ENCODE measurements at regions of chr14 and their contacts with region 1.

Region 1: DNA sequence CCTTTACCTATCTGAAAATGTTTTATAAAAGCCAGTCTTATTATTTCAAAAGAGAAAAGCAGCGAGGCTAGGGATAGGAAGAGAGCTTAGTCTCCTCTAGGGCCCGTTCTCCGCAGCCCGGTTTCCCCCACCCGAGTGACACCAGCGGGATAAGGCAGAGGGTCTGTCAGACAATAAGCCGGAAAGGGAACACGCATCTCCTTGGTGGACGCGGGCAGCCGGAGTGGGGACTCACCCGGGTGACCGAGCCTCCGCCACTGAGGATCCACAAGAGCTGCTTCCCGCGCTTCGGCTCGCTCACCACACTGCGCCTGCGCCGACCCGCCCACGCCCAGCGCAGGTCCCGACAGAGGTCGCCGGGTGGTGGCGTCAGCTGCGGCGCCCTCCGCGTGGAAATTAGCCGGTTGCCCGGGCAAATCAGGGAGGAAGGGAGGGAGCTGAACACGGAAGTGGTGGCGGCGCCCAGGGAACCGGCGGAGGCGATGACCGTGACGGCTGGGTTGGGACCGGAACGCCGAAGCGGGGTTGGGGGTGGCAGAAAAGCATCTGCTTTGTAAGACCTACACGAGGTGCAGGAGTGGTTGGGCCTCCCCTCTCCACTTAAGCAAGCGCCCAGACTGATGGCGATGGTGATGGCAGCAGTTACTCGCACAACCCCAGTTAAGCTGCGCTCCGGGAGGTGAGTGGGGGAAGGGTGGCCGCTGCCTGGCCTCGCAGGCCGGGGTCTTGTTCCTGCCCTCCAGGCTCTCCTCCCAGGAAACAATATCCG is at the starts of genes SOCS4 and WDHD1:
- DNase-seq: peak; percentile 95
- H3K4me3 ChIP-seq: peak within 1 kb of the TSS; percentile 81
- H3K27ac ChIP-seq: peak within 1 kb of the TSS; percentile 75
- H3K4me1 ChIP-seq: peaks cover 37% of the 10 kb centered on the region
- CTCF ChIP-seq: no peak
- total RNA-seq, gene SOCS4: 18.5 and 23.0 TPM in 2 replicates
- total RNA-seq, gene WDHD1: 33.5 and 42.6 TPM in 2 replicates

Region 2: DNA sequence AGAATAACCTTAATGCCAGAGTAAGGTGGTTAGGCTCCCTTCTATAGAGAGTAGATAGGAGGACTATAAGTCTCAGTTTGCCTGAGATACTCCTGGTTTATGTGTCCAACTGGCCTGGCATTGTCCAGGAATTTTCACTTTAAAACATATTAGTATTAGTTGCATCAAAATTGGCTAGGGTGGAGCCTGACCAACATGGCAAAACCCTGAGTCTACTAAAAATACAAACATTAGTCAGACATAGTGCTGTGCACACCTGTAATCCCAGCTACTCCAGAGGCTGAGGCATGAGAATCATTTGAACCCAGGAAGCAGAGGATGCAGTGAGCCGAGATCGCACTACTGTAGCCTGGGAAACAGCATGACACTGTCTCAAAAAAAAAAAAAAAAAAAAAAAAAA is 12.0 kb before region 1 on chr14:
- CTCF ChIA-PET with region 1: no interaction called
- POLR2A ChIA-PET with region 1: interaction called, 19 read pairs
- intact Hi-C with region 1: no loop called
- DNase-seq: no peak
- H3K4me3 ChIP-seq: no peak overlapping the region
- H3K27ac ChIP-seq: no peak overlapping the region
- H3K4me1 ChIP-seq: no peaks in the 10 kb centered on the region
- CTCF ChIP-seq: no peak

Region 3: DNA sequence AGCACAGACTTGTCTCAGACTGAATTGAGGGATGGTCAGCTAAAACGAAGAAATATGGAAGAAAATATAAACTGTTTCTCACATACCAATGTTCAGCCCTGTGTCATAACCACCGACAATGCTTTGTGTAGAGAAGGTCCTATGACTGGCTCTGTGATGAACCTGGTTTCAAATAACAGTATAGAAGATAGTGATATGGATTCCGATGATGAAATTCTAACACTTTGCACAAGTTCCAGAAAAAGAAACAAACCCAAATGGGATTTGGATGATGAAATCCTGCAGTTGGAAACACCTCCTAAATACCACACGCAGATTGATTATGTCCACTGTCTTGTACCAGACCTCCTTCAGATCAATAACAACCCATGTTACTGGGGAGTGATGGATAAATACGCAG is 16.6 kb after region 1 on chr14:
- CTCF ChIA-PET with region 1: no interaction called
- POLR2A ChIA-PET with region 1: interaction called, 19 read pairs
- intact Hi-C with region 1: no loop called
- DNase-seq: no peak
- H3K4me3 ChIP-seq: no peak overlapping the region
- H3K27ac ChIP-seq: no peak overlapping the region
- H3K4me1 ChIP-seq: no peaks in the 10 kb centered on the region
- CTCF ChIP-seq: no peak

Region 4: GRCh38 chr14:55051426-55052268 is 24.7 kb after region 1 on chr14 and contains the start of gene MAPK1IP1L:
- CTCF ChIA-PET with region 1: interaction called, 3 read pairs
- POLR2A ChIA-PET with region 1: interaction called, 12 read pairs
- intact Hi-C with region 1: loop called (anchors 1 kb)
- DNase-seq: peak; percentile 92
- H3K4me3 ChIP-seq: peak within 1 kb of the TSS; percentile 95
- H3K27ac ChIP-seq: peak within 1 kb of the TSS; percentile 81
- H3K4me1 ChIP-seq: peaks cover 20% of the 10 kb centered on the region
- CTCF ChIP-seq: peak; percentile 87
- total RNA-seq, gene MAPK1IP1L: 24.6 and 27.9 TPM in 2 replicates

Region 5: DNA sequence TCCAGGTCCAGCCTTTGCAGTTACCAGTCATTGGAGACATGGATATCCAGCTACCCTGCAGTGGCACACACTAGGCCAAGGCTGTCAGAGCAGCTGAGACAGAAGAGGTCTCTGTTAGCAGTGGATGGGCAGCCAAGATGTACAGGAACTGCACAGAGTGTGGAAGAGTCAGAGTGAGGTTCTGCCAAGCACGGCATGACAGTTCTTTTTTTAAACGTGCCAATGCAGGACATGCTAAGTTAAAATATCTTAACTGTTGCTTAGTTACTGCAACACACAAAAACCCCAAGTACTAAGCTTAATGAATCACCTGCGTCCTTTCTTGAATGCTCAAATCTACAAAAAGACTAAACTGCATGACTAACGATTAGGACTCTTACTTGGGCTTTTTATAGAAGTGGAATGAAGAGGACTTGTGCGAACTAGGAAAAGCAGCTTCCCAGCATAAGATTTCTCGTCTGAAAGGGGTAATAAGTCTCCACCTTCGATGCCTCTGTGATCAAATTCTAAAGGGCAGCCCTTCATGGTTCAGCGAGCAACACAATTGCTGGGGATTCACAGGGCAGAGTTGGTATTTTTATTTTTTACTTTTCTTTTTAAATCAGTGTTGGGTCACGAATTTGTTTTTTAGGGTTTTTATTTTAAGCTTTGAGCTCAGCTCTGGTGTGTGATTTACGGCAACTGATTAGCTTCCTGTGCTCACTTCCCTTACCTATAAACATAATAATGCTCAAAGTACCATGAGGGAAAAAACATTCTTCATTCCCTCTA is 45.1 kb after region 1 on chr14:
- CTCF ChIA-PET with region 1: no interaction called
- POLR2A ChIA-PET with region 1: interaction called, 10 read pairs
- intact Hi-C with region 1: no loop called
- DNase-seq: peak; percentile 36
- H3K4me3 ChIP-seq: peak overlapping the region; percentile 29
- H3K27ac ChIP-seq: peak overlapping the region; percentile 42
- H3K4me1 ChIP-seq: peaks cover 29% of the 10 kb centered on the region
- CTCF ChIP-seq: no peak

Region 6: DNA sequence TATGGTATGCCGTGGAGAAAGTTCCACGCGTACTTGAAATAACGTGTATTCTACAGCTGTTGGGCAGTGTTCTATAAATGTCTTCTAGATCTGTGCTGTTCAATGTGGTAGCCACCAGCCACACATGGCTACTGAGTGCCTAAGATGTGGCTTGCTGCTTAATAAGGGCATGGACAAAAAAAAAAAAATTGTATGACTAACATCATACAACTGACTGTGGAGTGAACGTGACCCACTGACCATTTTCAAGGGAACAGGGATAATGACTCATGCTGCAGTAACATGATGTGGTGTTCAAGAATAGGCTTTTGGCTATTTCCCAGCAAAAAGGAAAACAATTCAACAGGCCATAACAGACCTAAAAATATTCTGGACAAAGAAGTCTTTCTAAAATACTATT is 371.7 kb after region 1 on chr14:
- CTCF ChIA-PET with region 1: no interaction called
- POLR2A ChIA-PET with region 1: no interaction called
- intact Hi-C with region 1: no loop called
- DNase-seq: no peak
- H3K4me3 ChIP-seq: no peak overlapping the region
- H3K27ac ChIP-seq: no peak overlapping the region
- H3K4me1 ChIP-seq: no peaks in the 10 kb centered on the region
- CTCF ChIP-seq: no peak